ENCODE measurements at regions of chr13 and their contacts with region 1.

Region 1: GRCh38 chr13:98672944-98673545 is 79.4 kb downstream of the SLC15A1 start:
- DNase-seq: peak; percentile 68
- ATAC-seq: peak; percentile 80
- H3K4me3 Mint-ChIP-seq: no peak overlapping the region
- H3K27ac Mint-ChIP-seq: no peak overlapping the region
- H3K4me1 Mint-ChIP-seq: peaks cover 34% of the 10 kb centered on the region
- H3K27me3 Mint-ChIP-seq: peaks cover 3% of the 10 kb centered on the region; the same call in 1 of the 2 replicates
- CTCF ChIP-seq: peak; percentile 76

Region 2: DNA sequence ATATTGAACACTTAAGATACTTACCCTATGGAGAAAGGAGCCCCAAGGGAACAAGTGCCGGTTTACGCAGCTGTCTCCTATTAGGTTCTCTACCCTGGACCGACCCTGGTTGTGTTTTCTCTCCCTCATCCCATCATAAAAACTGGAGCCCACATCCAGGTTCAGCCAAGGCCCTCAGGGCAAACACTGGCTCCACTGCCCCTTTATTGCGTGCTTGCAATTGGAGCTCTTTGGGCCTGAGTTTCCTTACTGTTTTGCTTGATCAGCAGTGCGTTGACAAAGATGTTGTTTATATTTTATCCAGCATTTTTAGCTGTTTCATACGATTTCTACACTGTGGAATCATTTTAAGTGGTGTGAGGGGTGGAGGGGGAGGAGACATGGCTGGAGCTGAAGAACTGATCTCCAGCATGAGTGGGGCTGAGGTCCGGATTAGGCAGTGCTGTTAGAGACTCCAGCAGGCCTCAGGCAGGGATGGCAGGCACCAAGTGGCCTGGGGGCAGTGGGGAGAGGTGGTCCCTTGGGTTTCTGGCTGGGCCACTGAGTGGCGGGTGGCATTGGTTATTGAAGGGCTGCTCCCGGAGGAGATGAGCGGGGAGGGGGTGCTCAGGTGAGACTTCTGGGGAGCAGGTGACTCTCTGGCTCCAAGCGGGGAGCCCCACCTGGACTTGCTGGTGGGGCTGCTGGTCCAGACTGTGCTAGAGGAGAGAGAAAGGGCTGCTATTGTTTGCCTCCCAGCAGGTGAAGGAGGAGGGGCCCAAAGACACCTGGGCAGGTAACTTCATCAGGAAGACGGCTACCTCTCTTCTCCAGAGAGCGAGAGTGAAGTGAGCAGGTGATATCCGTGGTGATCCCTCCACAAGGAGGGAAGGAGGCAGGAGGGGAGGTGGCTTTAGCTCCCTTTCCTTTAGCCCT is 433.6 kb before region 1 on chr13:
- CTCF ChIA-PET with region 1: no interaction called
- POLR2A ChIA-PET with region 1: no interaction called
- DNase-seq: peak; percentile 53
- ATAC-seq: peak; percentile 87
- H3K4me3 Mint-ChIP-seq: no peak overlapping the region
- H3K27ac Mint-ChIP-seq: peak overlapping the region; percentile 29
- H3K4me1 Mint-ChIP-seq: peaks cover 34% of the 10 kb centered on the region
- H3K27me3 Mint-ChIP-seq: no peaks in the 10 kb centered on the region; the same call in 1 of the 2 replicates
- CTCF ChIP-seq: no peak

Region 3: GRCh38 chr13:98451676-98452470 is 221.2 kb before region 1 on chr13:
- CTCF ChIA-PET with region 1: interaction called, 17 read pairs
- POLR2A ChIA-PET with region 1: no interaction called
- DNase-seq: no peak
- ATAC-seq: no peak
- H3K4me3 Mint-ChIP-seq: no peak overlapping the region
- H3K27ac Mint-ChIP-seq: peak overlapping the region; percentile 28
- H3K4me1 Mint-ChIP-seq: peaks cover 28% of the 10 kb centered on the region
- H3K27me3 Mint-ChIP-seq: no peaks in the 10 kb centered on the region
- CTCF ChIP-seq: no peak

Region 4: GRCh38 chr13:98509271-98510155 is 163.5 kb before region 1 on chr13:
- CTCF ChIA-PET with region 1: interaction called, 13 read pairs
- POLR2A ChIA-PET with region 1: no interaction called
- DNase-seq: no peak
- ATAC-seq: no peak
- H3K4me3 Mint-ChIP-seq: no peak overlapping the region
- H3K27ac Mint-ChIP-seq: peak overlapping the region; percentile 46; the same call in 1 of the 2 replicates
- H3K4me1 Mint-ChIP-seq: peaks cover 65% of the 10 kb centered on the region
- H3K27me3 Mint-ChIP-seq: no peaks in the 10 kb centered on the region
- CTCF ChIP-seq: no peak

Region 5: DNA sequence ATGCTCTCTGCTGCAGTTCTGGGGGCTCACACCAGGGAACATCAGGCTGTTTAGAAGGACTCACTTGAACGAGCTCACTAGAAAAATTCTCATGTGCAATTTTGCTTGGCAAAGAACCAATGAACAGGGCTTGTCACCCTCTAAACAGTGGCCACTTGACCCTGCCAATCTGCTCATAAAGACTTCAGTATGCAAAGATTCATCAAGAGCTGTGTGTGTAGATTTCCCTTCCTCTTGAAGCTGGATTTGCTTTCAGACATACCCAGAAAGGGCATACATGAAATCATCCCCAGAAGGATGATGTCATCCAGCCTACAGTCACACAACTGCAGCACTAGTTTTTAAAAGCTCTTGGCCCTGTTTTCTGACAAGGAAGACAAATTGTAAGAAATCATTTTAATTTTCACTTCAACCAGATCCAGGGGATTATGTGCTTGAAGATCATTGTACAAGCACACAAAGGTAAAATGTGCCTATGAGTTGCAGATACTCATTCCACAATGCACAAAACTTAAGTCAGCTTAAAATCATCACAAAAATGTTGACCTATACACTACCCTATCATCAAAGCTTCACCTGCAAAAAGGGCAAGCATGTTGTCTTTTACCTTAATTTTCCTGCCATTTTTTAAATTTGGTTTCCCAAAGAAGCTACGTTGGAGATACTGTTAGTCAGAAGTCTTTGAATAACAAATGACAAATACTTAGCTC is 90.9 kb before region 1 on chr13:
- CTCF ChIA-PET with region 1: no interaction called
- POLR2A ChIA-PET with region 1: no interaction called
- DNase-seq: no peak
- ATAC-seq: no peak
- H3K4me3 Mint-ChIP-seq: no peak overlapping the region
- H3K27ac Mint-ChIP-seq: no peak overlapping the region
- H3K4me1 Mint-ChIP-seq: peaks cover 32% of the 10 kb centered on the region
- H3K27me3 Mint-ChIP-seq: no peaks in the 10 kb centered on the region
- CTCF ChIP-seq: no peak

Region 6: DNA sequence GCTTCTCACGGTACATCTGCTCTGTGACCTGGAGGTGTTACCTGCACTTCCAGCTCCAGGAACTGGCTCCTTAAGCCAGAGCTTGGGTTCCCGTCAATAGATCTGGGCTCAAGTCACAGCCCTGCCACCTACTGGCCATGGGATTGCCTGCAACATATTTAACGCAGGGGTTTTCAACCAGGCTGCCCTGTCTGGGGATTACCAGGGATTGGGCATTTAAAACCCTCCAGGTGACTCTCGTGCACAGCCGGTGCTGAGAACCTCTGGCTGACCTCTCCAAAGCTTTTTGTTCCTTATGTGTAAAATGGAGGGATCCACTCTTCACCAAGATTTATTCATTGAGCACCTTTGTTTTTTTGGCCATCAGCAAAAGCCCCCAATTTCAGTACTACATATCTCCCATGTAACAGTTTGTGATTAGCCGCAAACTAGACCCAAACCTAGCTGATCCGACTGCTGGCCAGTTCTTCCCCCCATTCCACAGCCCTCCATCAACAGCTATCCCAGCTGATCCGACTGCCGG is 19.5 kb before region 1 on chr13:
- CTCF ChIA-PET with region 1: interaction called, 26 read pairs
- POLR2A ChIA-PET with region 1: interaction called, 8 read pairs
- DNase-seq: peak; percentile 88
- ATAC-seq: peak; percentile 97
- H3K4me3 Mint-ChIP-seq: no peak overlapping the region
- H3K27ac Mint-ChIP-seq: peak overlapping the region; percentile 58; the same call in 1 of the 2 replicates
- H3K4me1 Mint-ChIP-seq: peaks cover 8% of the 10 kb centered on the region; the same call in 1 of the 2 replicates
- H3K27me3 Mint-ChIP-seq: no peaks in the 10 kb centered on the region; the same call in 1 of the 2 replicates
- CTCF ChIP-seq: peak; percentile 66

Region 7: DNA sequence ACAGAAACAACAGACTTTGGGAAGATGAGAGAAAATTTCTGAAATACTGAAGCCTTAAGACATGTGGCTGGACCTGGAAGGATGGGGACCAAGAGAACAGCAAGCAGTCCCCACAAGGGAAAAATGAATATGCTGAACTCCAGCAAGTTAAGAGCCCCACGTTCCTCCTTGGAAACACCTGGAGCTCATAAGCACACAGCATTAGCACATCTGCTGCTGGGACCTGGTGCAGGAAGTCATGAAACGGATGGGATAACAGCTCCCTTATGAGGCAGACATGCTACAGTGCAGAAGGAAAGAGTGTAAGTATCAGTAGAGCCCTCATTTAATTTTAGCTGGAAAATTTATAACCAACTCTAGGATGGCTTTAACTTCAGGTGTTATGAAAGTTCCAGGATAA is 12.1 kb after region 1 on chr13:
- CTCF ChIA-PET with region 1: interaction called, 20 read pairs
- POLR2A ChIA-PET with region 1: no interaction called
- DNase-seq: no peak
- ATAC-seq: no peak
- H3K4me3 Mint-ChIP-seq: no peak overlapping the region
- H3K27ac Mint-ChIP-seq: no peak overlapping the region
- H3K4me1 Mint-ChIP-seq: peaks cover 46% of the 10 kb centered on the region
- H3K27me3 Mint-ChIP-seq: no peaks in the 10 kb centered on the region
- CTCF ChIP-seq: no peak

Region 8: GRCh38 chr13:98970330-98970729 is 297.3 kb after region 1 on chr13:
- CTCF ChIA-PET with region 1: no interaction called
- POLR2A ChIA-PET with region 1: no interaction called
- DNase-seq: no peak
- ATAC-seq: no peak
- H3K4me3 Mint-ChIP-seq: no peak overlapping the region
- H3K27ac Mint-ChIP-seq: no peak overlapping the region
- H3K4me1 Mint-ChIP-seq: peaks cover 25% of the 10 kb centered on the region
- H3K27me3 Mint-ChIP-seq: no peaks in the 10 kb centered on the region
- CTCF ChIP-seq: no peak